Left lung (tissue), 14 donors: ENCODE measurements at regions of chr10 and their contacts with region 1.

Region 1: GRCh38 chr10:102394079-102394800 is 1.3 kb upstream of the NFKB2 start:
- DNase-seq: peak; percentile 91 to 98 (median 96)
- ATAC-seq: peak; percentile 88
- H3K4me3 ChIP-seq: peak overlapping the region; percentile 44 to 72
- H3K27ac ChIP-seq: peak overlapping the region; percentile 96
- H3K4me1 ChIP-seq: peaks cover 13 to 46% of the 10 kb centered on the region in 2 donors
- H3K27me3 ChIP-seq: no peaks in the 10 kb centered on the region
- CTCF ChIP-seq: no peak

Region 2: GRCh38 chr10:102596506-102596971 is 202.3 kb after region 1 on chr10:
- intact Hi-C with region 1: loop called in 1 of 2 experiments (anchors 10 kb)
- DNase-seq: no peak
- ATAC-seq: peak; percentile 91
- H3K4me3 ChIP-seq: no peak overlapping the region
- H3K27ac ChIP-seq: peak overlapping the region in 1 of 2 donors; percentile 63
- H3K4me1 ChIP-seq: peaks cover 3 to 51% of the 10 kb centered on the region in 2 donors
- H3K27me3 ChIP-seq: no peaks in the 10 kb centered on the region
- CTCF ChIP-seq: peak; percentile 67 to 79